ENCODE measurements at regions of chr10 and their contacts with region 1.

Region 1: DNA sequence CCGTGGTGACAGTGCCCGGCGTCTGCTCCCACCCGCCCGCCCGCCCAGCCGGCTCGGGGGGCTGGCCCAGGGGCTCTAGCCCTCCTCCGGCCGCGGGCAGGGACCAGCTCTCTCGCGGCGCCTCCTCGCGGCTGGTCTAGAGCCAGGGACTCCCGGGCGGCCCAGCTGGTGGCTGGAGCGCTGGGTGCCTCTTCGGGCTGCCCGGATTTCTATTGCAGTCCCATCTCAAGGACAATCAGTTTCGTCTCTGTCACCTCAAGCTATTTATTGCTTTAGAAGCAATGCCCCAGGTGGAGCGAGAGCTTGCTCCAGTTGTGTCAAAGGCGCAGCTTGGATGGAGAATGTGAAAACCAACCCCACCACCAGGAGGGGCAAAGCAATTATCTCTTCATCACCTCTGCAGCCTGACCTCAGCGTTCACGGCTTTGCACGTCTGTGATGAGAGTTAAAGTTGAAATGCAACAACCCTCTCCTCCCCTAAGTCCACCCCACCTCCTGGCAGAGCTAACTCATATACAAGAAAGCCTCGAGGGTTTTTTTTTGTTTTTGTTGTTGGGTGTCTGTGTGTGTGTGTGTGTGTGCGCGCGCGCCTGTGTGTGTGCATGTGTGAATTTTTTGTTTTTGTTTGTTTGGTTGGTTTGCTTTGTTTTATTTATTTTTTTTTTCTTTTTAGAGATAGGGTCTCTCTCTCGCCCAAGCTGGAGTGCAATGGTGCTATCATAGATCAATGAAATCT is at the start of gene ITGA8:
- DNase-seq: peak; percentile 23
- H3K4me3 ChIP-seq: peak within 1 kb of the TSS; percentile 37
- H3K27ac ChIP-seq: peak within 1 kb of the TSS; percentile 22
- H3K4me1 ChIP-seq: no peaks in the 10 kb centered on the region
- H3K27me3 ChIP-seq: peaks cover 17% of the 10 kb centered on the region
- CTCF ChIP-seq: no peak
- total RNA-seq, gene ITGA8: 2.1 to 3.5 TPM

Region 2: DNA sequence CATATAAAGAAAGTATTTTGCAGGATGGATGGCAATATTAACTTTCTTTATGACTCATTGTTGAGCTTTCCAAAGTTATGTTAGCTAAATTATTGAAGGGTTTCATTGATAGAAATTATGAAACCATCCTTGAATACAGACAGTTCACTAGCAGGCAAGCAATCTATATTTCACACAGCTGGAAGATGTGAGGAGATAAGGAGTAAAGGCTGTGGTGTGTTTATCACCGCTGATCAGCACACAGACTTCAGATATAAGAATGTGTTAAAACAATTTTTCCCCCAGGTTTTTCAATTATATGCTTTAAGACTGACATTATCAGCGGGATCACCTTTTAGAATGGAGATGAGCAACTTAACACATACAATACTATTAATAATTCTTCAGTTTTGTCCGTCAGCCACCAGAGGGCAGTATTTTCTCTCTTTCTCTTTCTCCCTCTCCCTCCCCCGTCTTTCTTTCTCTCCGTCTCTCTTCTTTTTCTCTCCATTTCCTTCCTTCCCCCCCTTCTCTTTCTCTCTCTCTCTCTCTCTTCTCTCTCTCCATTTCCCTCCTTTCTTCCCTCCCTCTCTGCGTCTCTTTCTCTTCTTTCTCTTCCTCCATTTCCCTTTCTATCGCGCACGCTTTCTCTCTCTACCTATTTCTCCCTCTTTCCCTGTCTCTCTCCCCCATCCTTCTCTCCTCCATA is 286.1 kb before region 1 on chr10:
- intact Hi-C with region 1: loop called (anchors 5 kb)
- DNase-seq: peak; percentile 47
- H3K4me3 ChIP-seq: no peak overlapping the region
- H3K27ac ChIP-seq: no peak overlapping the region
- H3K4me1 ChIP-seq: no peaks in the 10 kb centered on the region
- H3K27me3 ChIP-seq: no peaks in the 10 kb centered on the region
- CTCF ChIP-seq: peak; percentile 68

Region 3: DNA sequence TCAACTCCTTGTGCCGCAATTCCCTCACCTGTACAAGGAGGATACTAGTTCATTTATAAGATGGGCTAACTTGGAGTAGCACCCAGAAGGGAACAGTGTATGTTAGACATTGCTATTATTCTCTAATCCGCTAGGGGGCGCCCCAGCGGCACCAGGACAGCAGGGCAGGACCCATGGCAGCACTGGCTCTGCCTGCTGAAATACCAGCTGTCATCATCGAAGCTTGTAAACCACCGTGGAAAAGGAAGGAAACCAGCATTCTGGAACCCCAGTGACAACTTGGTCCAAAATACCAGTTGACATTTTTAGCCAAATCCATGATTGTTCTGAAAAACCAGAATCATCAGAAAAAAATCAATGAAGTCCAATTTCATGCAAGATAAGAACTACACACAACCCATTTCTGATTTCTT is 134.8 kb before region 1 on chr10:
- intact Hi-C with region 1: loop called (anchors 10 kb)
- DNase-seq: peak; percentile 71
- H3K4me3 ChIP-seq: no peak overlapping the region
- H3K27ac ChIP-seq: no peak overlapping the region
- H3K4me1 ChIP-seq: no peaks in the 10 kb centered on the region
- H3K27me3 ChIP-seq: no peaks in the 10 kb centered on the region
- CTCF ChIP-seq: peak; percentile 63

Region 4: GRCh38 chr10:15658069-15658702 is 61.9 kb before region 1 on chr10:
- intact Hi-C with region 1: no loop called
- DNase-seq: no peak
- H3K4me3 ChIP-seq: no peak overlapping the region
- H3K27ac ChIP-seq: no peak overlapping the region
- H3K4me1 ChIP-seq: no peaks in the 10 kb centered on the region
- H3K27me3 ChIP-seq: no peaks in the 10 kb centered on the region
- CTCF ChIP-seq: no peak

Region 5: GRCh38 chr10:15859906-15860691 is 140.0 kb after region 1 on chr10 and contains the start of gene MINDY3:
- intact Hi-C with region 1: no loop called
- DNase-seq: peak; percentile 87
- H3K4me3 ChIP-seq: peak within 1 kb of the TSS; percentile 98
- H3K27ac ChIP-seq: peak within 1 kb of the TSS; percentile 85
- H3K4me1 ChIP-seq: peaks cover 20% of the 10 kb centered on the region
- H3K27me3 ChIP-seq: no peaks in the 10 kb centered on the region
- CTCF ChIP-seq: no peak
- total RNA-seq, gene MINDY3: 23.0 to 25.6 TPM

Measured in colonic mucosa (tissue), 4 donors.